CD8-positive, alpha-beta T cell (primary cell): ENCODE measurements at regions of chr5 and their contacts with region 1.

Region 1: GRCh38 chr5:96896806-96897205 is 20.5 kb downstream of the ERAP2 start:
- DNase-seq: peak in 2 of 9 experiments; percentile 19 to 53
- ATAC-seq: peak; percentile 45
- H3K4me3 ChIP-seq: peak overlapping the region in 1 of 2 experiments; percentile 19
- H3K4me3 Mint-ChIP-seq: peak overlapping the region; percentile 81
- H3K27ac ChIP-seq: peak overlapping the region; percentile 31 to 75
- H3K27ac Mint-ChIP-seq: peak overlapping the region; percentile 95
- H3K4me1 ChIP-seq: peaks cover 19% of the 10 kb centered on the region
- H3K4me1 Mint-ChIP-seq: peaks cover 48% of the 10 kb centered on the region
- H3K27me3 ChIP-seq: no peaks in the 10 kb centered on the region
- H3K27me3 Mint-ChIP-seq: no peaks in the 10 kb centered on the region
- CTCF ChIP-seq: no peak

Region 2: DNA sequence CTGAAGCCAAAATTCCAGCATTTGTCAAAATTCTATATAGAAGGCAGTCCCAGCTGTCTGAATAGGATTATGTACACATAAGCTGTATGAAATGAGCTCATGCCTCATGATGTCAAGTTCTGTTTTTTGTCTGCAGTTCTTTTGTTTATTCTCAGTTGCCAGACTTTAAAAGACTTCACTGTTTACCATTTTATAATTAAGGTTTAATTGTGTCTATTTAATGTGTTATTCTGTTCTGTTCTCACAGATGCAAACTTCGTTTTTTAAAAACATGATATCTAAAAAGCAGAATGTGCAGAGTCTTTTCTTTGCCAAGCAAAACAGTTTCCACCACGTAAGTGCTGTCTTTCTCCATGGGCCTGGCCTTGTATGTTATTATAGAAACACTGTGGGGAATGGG is 120.2 kb before region 1 on chr5:
- CTCF ChIA-PET with region 1: no interaction called
- POLR2A ChIA-PET with region 1: no interaction called
- intact Hi-C with region 1: loop called in 1 of 2 experiments (anchors 10 kb)
- DNase-seq: no peak
- ATAC-seq: no peak
- H3K4me3 ChIP-seq: no peak overlapping the region
- H3K4me3 Mint-ChIP-seq: no peak overlapping the region
- H3K27ac ChIP-seq: no peak overlapping the region
- H3K27ac Mint-ChIP-seq: no peak overlapping the region
- H3K4me1 ChIP-seq: no peaks in the 10 kb centered on the region
- H3K4me1 Mint-ChIP-seq: peaks cover 11% of the 10 kb centered on the region
- H3K27me3 ChIP-seq: no peaks in the 10 kb centered on the region
- H3K27me3 Mint-ChIP-seq: no peaks in the 10 kb centered on the region
- CTCF ChIP-seq: no peak

Region 3: DNA sequence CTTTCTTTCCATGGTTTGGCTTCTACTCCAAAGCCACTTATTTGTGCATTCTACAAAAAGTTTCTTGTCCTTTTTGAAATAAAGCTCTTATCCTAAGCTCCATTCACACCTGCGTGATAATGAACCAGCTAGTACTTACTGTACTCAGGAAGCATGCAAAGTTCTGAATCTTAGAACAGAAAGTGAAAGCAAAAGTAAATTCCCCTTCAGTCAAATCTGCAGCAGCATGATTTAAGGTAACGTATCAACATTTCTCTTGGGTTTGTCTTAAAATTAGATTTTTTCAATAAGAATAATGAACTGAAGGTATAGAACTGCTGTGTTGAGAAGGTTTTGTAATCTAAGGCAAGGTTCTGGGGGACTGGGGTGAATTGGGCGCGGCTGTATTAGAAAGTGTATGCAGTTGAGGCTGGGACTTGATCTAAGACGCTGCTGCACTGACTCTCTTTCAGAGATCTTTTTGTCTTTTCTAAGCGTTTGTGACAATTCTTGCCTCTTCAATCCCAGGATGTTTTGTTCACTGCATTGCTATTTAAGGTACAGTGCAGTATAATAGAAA is 20.4 kb before region 1 on chr5 and contains the start of gene ERAP2:
- CTCF ChIA-PET with region 1: interaction called, 4 read pairs
- POLR2A ChIA-PET with region 1: interaction called, 7 read pairs
- intact Hi-C with region 1: loop called in 1 of 2 experiments (anchors 1 kb)
- DNase-seq: peak in 2 of 9 experiments; percentile 63 to 79
- ATAC-seq: peak; percentile 80
- H3K4me3 ChIP-seq: peak within 1 kb of the TSS; percentile 74 to 76
- H3K4me3 Mint-ChIP-seq: peak within 1 kb of the TSS; percentile 96
- H3K27ac ChIP-seq: peak within 1 kb of the TSS; percentile 75 to 78
- H3K27ac Mint-ChIP-seq: peak within 1 kb of the TSS; percentile 95
- H3K4me1 ChIP-seq: peaks cover 38% of the 10 kb centered on the region
- H3K4me1 Mint-ChIP-seq: peaks cover 71% of the 10 kb centered on the region
- H3K27me3 ChIP-seq: no peaks in the 10 kb centered on the region
- H3K27me3 Mint-ChIP-seq: no peaks in the 10 kb centered on the region
- CTCF ChIP-seq: no peak
- total RNA-seq, gene ERAP2: 46.5 to 49.9 TPM

Region 4: GRCh38 chr5:98872674-98873073 is 1975.9 kb after region 1 on chr5:
- CTCF ChIA-PET with region 1: no interaction called
- POLR2A ChIA-PET with region 1: no interaction called
- intact Hi-C with region 1: loop called in 1 of 2 experiments (anchors 10 kb)
- DNase-seq: no peak
- ATAC-seq: no peak
- H3K4me3 ChIP-seq: no peak overlapping the region
- H3K4me3 Mint-ChIP-seq: no peak overlapping the region
- H3K27ac ChIP-seq: no peak overlapping the region
- H3K27ac Mint-ChIP-seq: no peak overlapping the region
- H3K4me1 ChIP-seq: no peaks in the 10 kb centered on the region
- H3K4me1 Mint-ChIP-seq: peaks cover 4% of the 10 kb centered on the region
- H3K27me3 ChIP-seq: no peaks in the 10 kb centered on the region
- H3K27me3 Mint-ChIP-seq: no peaks in the 10 kb centered on the region
- CTCF ChIP-seq: no peak